Naive thymus-derived CD4-positive, alpha-beta T cell (primary cell): ENCODE measurements at regions of chr7 and their contacts with region 1.

Region 1: DNA sequence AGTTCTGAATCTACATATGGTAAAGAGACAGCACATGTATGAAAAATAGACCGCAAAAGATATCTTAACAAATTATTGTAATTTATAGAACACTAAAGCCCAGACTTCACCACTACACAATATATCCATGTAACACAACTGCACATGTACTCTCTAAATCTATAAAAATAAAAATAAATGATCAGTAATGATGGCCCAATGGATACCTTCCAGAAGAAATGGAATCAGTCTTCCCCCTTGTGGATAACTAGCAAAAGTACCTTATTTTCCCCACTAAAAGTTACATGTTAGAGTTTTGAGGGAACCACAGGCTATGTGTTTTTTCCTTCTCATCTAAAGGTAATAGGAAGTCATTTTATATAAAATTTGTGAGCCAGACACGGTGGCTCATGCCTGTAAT is 25.7 kb downstream of the C7orf25 start:
- DNase-seq: no peak
- ATAC-seq: no peak
- H3K4me3 ChIP-seq: no peak overlapping the region
- H3K4me3 Mint-ChIP-seq: no peak overlapping the region
- H3K27ac ChIP-seq: no peak overlapping the region
- H3K27ac Mint-ChIP-seq: peak overlapping the region in 4 of 9 donors; percentile 27 to 96 (median 54)
- H3K4me1 ChIP-seq: no peaks in the 10 kb centered on the region
- H3K4me1 Mint-ChIP-seq: peaks cover 18 to 34% (median 25%) of the 10 kb centered on the region in 7 donors
- H3K27me3 ChIP-seq: no peaks in the 10 kb centered on the region
- H3K27me3 Mint-ChIP-seq: peaks cover 0 to 3% (median 0%) of the 10 kb centered on the region in 5 donors

Region 2: GRCh38 chr7:42843205-42843800 is 42.8 kb before region 1 on chr7:
- CTCF ChIA-PET with region 1: no interaction called
- POLR2A ChIA-PET with region 1: no interaction called
- intact Hi-C with region 1: no loop called
- DNase-seq: no peak
- ATAC-seq: no peak
- H3K4me3 ChIP-seq: no peak overlapping the region
- H3K4me3 Mint-ChIP-seq: no peak overlapping the region
- H3K27ac ChIP-seq: no peak overlapping the region
- H3K27ac Mint-ChIP-seq: no peak overlapping the region
- H3K4me1 ChIP-seq: no peaks in the 10 kb centered on the region
- H3K4me1 Mint-ChIP-seq: no peaks in the 10 kb centered on the region
- H3K27me3 ChIP-seq: no peaks in the 10 kb centered on the region
- H3K27me3 Mint-ChIP-seq: peaks cover 31 to 39% (median 38%) of the 10 kb centered on the region in 5 donors

Region 3: DNA sequence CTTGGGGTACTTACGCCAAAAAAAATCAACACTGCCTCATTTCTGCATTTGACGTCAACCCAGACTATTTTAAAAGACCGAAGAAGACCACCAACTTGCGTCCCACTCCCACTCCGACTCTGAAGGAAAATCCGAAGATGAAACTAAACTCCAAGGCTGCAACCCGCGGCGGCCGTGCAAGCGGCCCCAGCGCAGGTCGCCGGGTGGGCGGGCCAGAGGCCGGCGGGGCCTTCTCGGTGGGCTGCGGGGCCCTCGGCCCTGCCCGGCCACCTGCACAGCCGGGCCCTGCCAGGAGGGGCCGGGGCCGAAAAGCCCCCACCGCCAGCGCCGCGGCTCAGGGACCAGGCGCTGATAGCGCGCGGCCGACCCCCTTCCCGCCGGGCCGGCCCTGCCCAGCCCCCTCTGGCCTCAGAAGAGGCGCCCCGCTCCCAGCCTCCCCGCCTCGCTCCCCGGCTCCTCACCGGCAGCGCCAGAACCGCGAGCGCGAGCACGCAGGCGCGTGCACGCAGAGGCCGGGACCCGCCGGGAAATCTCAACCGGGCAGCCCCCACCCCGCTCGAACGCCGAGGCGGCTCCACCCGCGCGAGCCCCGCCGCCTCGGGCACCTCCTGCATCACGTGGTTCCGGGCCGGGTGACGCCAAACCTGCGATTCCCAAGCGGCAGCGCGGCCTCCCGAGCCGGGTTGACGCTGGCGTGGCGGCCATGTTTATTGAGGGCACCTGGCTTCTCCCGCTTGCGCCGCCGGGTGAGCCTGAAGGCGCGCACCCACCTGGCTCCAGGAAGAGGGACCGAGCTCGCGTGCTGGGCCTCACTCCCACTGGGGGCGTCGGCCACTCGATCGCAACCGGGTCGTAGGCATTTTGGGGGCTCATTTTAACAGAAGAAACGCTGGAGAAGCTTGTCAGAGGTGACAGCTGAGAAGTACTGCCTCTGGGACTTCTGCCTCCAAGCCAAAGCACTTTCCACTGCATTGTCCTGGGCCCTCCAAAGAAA is 25.6 kb after region 1 on chr7 and contains the start of gene C7orf25:
- CTCF ChIA-PET with region 1: no interaction called
- POLR2A ChIA-PET with region 1: interaction called, 7 read pairs
- intact Hi-C with region 1: loop called (anchors 1 kb)
- DNase-seq: peak; percentile 92 to 97 (median 95)
- ATAC-seq: peak; percentile 95
- H3K4me3 ChIP-seq: peak within 1 kb of the TSS; percentile 64
- H3K4me3 Mint-ChIP-seq: peak within 1 kb of the TSS; percentile 81 to 98 (median 90)
- H3K27ac ChIP-seq: peak within 1 kb of the TSS; percentile 82
- H3K27ac Mint-ChIP-seq: peak within 1 kb of the TSS; percentile 81 to 95 (median 92)
- H3K4me1 ChIP-seq: peaks cover 9 to 18% of the 10 kb centered on the region in 2 donors
- H3K4me1 Mint-ChIP-seq: peaks cover 28 to 73% (median 53%) of the 10 kb centered on the region in 7 donors
- H3K27me3 ChIP-seq: no peaks in the 10 kb centered on the region
- H3K27me3 Mint-ChIP-seq: no peaks in the 10 kb centered on the region
- total RNA-seq, gene C7orf25: 2.3 to 10.9 (median 5.3) TPM